Caco-2 (cell line): ENCODE measurements at regions of chr9 and their contacts with region 1.

Region 1: GRCh38 chr9:33076358-33077004 is at the start of gene SMU1:
- DNase-seq: peak; percentile 96 to 97
- H3K4me3 ChIP-seq: peak within 1 kb of the TSS; percentile 64
- H3K4me3 Mint-ChIP-seq: peak within 1 kb of the TSS; percentile 85
- H3K27ac Mint-ChIP-seq: peak within 1 kb of the TSS; percentile 96
- H3K4me1 ChIP-seq: peaks cover 3% of the 10 kb centered on the region; the same call in 1 of the 2 replicates
- H3K4me1 Mint-ChIP-seq: peaks cover 5% of the 10 kb centered on the region
- H3K27me3 ChIP-seq: no peaks in the 10 kb centered on the region
- H3K27me3 Mint-ChIP-seq: no peaks in the 10 kb centered on the region
- CTCF ChIP-seq: no peak
- total RNA-seq, gene SMU1: 23.6 TPM in 2 replicates

Region 2: GRCh38 chr9:32877639-32878217 is 198.8 kb before region 1 on chr9:
- CTCF ChIA-PET with region 1: no interaction called
- POLR2A ChIA-PET with region 1: no interaction called
- intact Hi-C with region 1: no loop called
- DNase-seq: no peak
- H3K4me3 ChIP-seq: no peak overlapping the region
- H3K4me3 Mint-ChIP-seq: no peak overlapping the region
- H3K27ac Mint-ChIP-seq: no peak overlapping the region
- H3K4me1 ChIP-seq: no peaks in the 10 kb centered on the region; the same call in 1 of the 2 replicates
- H3K4me1 Mint-ChIP-seq: no peaks in the 10 kb centered on the region
- H3K27me3 ChIP-seq: no peaks in the 10 kb centered on the region
- H3K27me3 Mint-ChIP-seq: no peaks in the 10 kb centered on the region
- CTCF ChIP-seq: no peak

Region 3: GRCh38 chr9:33024966-33025571 is 51.4 kb before region 1 on chr9 and contains the start of gene DNAJA1:
- CTCF ChIA-PET with region 1: no interaction called
- POLR2A ChIA-PET with region 1: interaction called, 13 read pairs
- intact Hi-C with region 1: no loop called
- DNase-seq: peak; percentile 93 to 97
- H3K4me3 ChIP-seq: peak within 1 kb of the TSS; percentile 100
- H3K4me3 Mint-ChIP-seq: peak within 1 kb of the TSS; percentile 86
- H3K27ac Mint-ChIP-seq: peak within 1 kb of the TSS; percentile 87
- H3K4me1 ChIP-seq: peaks cover 28% of the 10 kb centered on the region
- H3K4me1 Mint-ChIP-seq: peaks cover 20% of the 10 kb centered on the region
- H3K27me3 ChIP-seq: no peaks in the 10 kb centered on the region
- H3K27me3 Mint-ChIP-seq: no peaks in the 10 kb centered on the region
- CTCF ChIP-seq: no peak
- total RNA-seq, gene DNAJA1: 187 and 198 TPM in 2 replicates

Region 4: GRCh38 chr9:33044127-33044673 is 32.3 kb before region 1 on chr9:
- CTCF ChIA-PET with region 1: no interaction called
- POLR2A ChIA-PET with region 1: no interaction called
- intact Hi-C with region 1: no loop called
- DNase-seq: peak; percentile 77 to 84
- H3K4me3 ChIP-seq: peak overlapping the region; percentile 56
- H3K4me3 Mint-ChIP-seq: peak overlapping the region; percentile 79
- H3K27ac Mint-ChIP-seq: peak overlapping the region; percentile 45
- H3K4me1 ChIP-seq: peaks cover 4% of the 10 kb centered on the region; the same call in 1 of the 2 replicates
- H3K4me1 Mint-ChIP-seq: peaks cover 6% of the 10 kb centered on the region
- H3K27me3 ChIP-seq: no peaks in the 10 kb centered on the region
- H3K27me3 Mint-ChIP-seq: no peaks in the 10 kb centered on the region
- CTCF ChIP-seq: no peak

Region 5: DNA sequence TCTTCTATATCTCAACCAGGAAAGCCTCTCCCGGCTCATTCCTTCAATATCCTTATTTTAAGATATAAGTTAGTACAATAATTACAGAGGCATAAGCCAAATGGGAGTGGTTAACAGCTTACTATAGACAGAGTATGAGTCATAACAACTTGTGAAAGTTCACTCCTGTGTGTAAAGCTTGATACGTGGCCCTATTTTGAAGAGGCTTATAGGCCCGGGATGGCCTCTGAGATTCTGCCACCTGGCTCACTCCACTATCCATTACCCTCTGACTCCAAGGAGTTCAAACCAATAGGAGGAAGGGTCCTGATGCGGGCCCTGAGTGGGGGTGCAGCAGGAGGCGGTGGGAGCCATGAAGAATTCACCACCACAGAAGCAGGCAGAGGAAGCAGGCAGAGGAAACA is 54.0 kb after region 1 on chr9:
- CTCF ChIA-PET with region 1: no interaction called
- POLR2A ChIA-PET with region 1: no interaction called
- intact Hi-C with region 1: loop called (anchors 2 kb)
- DNase-seq: no peak
- H3K4me3 ChIP-seq: no peak overlapping the region
- H3K4me3 Mint-ChIP-seq: peak overlapping the region; percentile 50
- H3K27ac Mint-ChIP-seq: peak overlapping the region; percentile 97
- H3K4me1 ChIP-seq: peaks cover 68% of the 10 kb centered on the region
- H3K4me1 Mint-ChIP-seq: peaks cover 59% of the 10 kb centered on the region
- H3K27me3 ChIP-seq: no peaks in the 10 kb centered on the region
- H3K27me3 Mint-ChIP-seq: no peaks in the 10 kb centered on the region
- CTCF ChIP-seq: no peak

Region 6: DNA sequence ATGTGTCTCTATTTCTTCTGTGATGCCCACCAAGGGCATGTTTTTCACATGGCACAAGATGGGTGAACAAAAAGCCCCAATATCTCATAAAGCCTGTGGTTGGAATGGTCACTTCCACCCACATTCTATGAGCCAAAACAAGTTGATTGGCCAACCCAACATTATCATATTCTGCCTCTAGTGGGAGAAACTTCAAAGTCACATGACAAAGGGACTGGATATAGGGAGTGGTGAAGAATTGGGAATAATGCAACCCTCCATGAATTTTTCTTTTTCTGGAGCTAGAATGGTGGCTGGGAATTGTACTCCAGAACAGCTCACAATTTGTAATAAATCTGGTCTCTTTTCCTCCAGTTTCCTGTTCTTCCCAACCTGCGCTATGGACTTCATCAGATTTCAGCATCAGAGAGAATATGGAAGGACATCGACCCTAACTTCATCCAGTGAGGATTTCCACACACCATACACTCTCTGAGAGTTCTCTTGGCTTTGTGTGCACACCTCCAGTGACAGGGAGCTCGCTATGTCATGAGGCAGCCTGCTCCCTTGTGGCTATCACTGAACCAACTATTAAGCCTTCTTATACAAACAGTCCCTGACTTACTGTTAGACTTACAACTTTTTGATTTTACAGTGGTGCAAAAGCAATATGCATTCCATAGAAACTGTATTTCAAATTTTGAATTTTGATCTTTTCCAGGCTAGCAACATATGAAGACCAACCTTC is 102.7 kb after region 1 on chr9:
- CTCF ChIA-PET with region 1: no interaction called
- POLR2A ChIA-PET with region 1: interaction called, 3 read pairs
- intact Hi-C with region 1: loop called (anchors 1 kb)
- DNase-seq: peak in 1 of 2 experiments; percentile 51
- H3K4me3 ChIP-seq: no peak overlapping the region
- H3K4me3 Mint-ChIP-seq: no peak overlapping the region
- H3K27ac Mint-ChIP-seq: no peak overlapping the region
- H3K4me1 ChIP-seq: 0 out of 2 replicates have a peak, but pooled peaks cover 9% of the 10 kb centered on the region
- H3K4me1 Mint-ChIP-seq: peaks cover 6% of the 10 kb centered on the region
- H3K27me3 ChIP-seq: no peaks in the 10 kb centered on the region
- H3K27me3 Mint-ChIP-seq: no peaks in the 10 kb centered on the region
- CTCF ChIP-seq: no peak

Region 7: DNA sequence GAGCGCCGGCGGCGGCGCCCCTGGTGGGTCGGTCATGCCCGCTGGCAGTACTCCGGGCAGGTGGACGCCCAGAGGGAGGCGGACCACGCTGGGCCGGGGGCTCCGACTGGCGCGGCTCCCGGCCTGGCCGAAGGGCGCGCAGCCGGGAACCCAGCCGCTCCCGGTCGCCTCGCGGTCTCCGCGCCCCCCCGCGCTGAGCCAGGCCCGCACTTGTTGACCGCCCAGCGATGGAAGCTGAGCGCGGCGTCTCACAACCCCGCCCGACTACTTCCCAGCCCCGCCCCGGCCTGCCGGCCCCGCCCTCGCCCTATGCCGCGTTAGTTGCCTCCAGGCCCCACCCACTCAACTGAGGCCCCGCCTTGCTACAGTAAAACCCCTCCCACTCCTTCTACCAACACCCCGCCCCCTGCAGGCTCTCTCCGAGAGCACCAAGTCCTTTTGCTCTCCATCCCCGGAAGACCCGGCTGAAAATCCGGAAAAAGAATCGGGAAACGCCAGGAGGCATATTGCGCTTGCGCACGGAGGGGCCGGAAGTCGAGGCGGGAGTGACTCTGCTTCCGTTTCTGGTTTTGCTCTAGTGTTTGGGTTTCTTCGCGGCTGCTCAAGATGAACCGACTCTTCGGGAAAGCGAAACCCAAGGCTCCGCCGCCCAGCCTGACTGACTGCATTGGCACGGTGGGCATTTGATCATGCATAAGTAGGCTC is 188.1 kb after region 1 on chr9 and contains the starts of genes BAG1 and CHMP5:
- CTCF ChIA-PET with region 1: no interaction called
- POLR2A ChIA-PET with region 1: no interaction called
- intact Hi-C with region 1: loop called (anchors 1 kb)
- DNase-seq: peak; percentile 99
- H3K4me3 ChIP-seq: peak within 1 kb of the TSS; percentile 100
- H3K4me3 Mint-ChIP-seq: peak within 1 kb of the TSS; percentile 87
- H3K27ac Mint-ChIP-seq: peak within 1 kb of the TSS; percentile 87
- H3K4me1 ChIP-seq: no peaks in the 10 kb centered on the region
- H3K4me1 Mint-ChIP-seq: peaks cover 16% of the 10 kb centered on the region
- H3K27me3 ChIP-seq: no peaks in the 10 kb centered on the region
- H3K27me3 Mint-ChIP-seq: no peaks in the 10 kb centered on the region
- CTCF ChIP-seq: peak in 1 of 2 experiments; percentile 25
- total RNA-seq, gene BAG1: 51.2 and 62.1 TPM in 2 replicates
- total RNA-seq, gene CHMP5: 52.5 and 58.3 TPM in 2 replicates